CD4-positive, alpha-beta memory T cell (primary cell): ENCODE measurements at regions of chr1 and their contacts with region 1.

Region 1: DNA sequence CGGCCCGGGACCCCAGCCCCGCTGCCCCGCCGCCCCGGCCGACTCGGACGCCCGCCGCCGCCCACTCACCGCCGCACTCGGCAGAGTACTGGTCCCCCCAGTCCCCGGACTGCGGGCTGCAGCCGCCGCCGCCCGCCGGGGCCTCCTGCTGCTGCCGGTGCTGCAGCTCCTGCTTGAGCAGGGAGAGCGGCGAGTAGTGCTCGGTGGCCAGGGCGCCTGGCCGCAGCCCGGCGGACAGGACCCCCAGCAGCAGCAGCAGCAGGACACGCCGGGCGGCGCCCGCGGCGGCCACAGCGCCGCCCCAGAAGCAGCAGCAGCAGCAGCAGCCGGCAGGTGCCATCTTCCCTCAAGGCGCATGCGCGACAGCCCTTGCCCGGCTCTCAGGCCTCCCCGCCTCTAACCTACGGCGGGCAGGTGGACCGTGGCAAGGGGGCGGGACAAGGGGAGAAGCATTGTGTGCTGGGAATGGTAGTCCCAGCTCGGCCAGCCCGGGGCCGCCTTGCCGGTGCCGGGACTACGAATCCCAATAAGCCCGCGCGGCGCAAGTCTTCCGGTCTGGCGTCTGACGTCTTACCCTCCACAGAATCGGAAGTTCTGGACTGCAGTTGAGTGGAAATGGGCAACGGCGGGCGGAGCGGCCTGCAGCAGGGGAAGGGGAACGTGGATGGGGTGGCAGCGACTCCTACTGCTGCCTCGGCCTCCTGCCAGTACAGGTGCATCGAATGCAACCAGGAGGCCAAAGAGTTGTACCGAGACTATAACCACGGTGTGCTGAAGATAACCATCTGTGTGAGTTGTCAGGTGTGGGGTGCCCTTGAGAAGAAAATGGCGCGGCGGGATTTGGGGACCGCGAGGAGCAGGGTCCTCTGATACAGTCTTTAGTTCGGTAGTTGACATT is at the starts of genes ARV1 and TTC13:
- DNase-seq: peak; percentile 95 to 97 (median 96)
- H3K4me3 ChIP-seq: peak within 1 kb of the TSS; percentile 66 to 86
- H3K4me3 Mint-ChIP-seq: peak within 1 kb of the TSS; percentile 94 to 100 (median 98)
- H3K27ac ChIP-seq: peak within 1 kb of the TSS; percentile 69
- H3K27ac Mint-ChIP-seq: peak within 1 kb of the TSS; percentile 92 to 100 (median 97)
- H3K4me1 ChIP-seq: peaks cover 59% of the 10 kb centered on the region
- H3K4me1 Mint-ChIP-seq: peaks cover 34 to 41% (median 38%) of the 10 kb centered on the region in 4 donors
- H3K27me3 ChIP-seq: no peaks in the 10 kb centered on the region
- H3K27me3 Mint-ChIP-seq: no peaks in the 10 kb centered on the region
- total RNA-seq, gene ARV1: 13.8 to 14.2 TPM
- total RNA-seq, gene TTC13: 43.9 to 54.5 TPM

Region 2: GRCh38 chr1:230797942-230798418 is 180.8 kb before region 1 on chr1:
- CTCF ChIA-PET with region 1: no interaction called
- POLR2A ChIA-PET with region 1: no interaction called
- intact Hi-C with region 1: loop called (anchors 2 kb)
- DNase-seq: no peak
- H3K4me3 ChIP-seq: no peak overlapping the region
- H3K4me3 Mint-ChIP-seq: no peak overlapping the region
- H3K27ac ChIP-seq: no peak overlapping the region
- H3K27ac Mint-ChIP-seq: no peak overlapping the region
- H3K4me1 ChIP-seq: no peaks in the 10 kb centered on the region
- H3K4me1 Mint-ChIP-seq: no peaks in the 10 kb centered on the region
- H3K27me3 ChIP-seq: no peaks in the 10 kb centered on the region
- H3K27me3 Mint-ChIP-seq: peaks cover 11 to 18% of the 10 kb centered on the region in 2 donors

Region 3: GRCh38 chr1:230917284-230918135 is 61.2 kb before region 1 on chr1:
- CTCF ChIA-PET with region 1: interaction called, 19 read pairs
- POLR2A ChIA-PET with region 1: interaction called, 3 read pairs
- intact Hi-C with region 1: loop called (anchors 1 kb)
- DNase-seq: peak; percentile 67 to 74 (median 69)
- H3K4me3 ChIP-seq: no peak overlapping the region
- H3K4me3 Mint-ChIP-seq: no peak overlapping the region
- H3K27ac ChIP-seq: no peak overlapping the region
- H3K27ac Mint-ChIP-seq: peak overlapping the region in 2 of 7 donors; percentile 43 to 61
- H3K4me1 ChIP-seq: no peaks in the 10 kb centered on the region
- H3K4me1 Mint-ChIP-seq: peaks cover 0 to 2% (median 0%) of the 10 kb centered on the region in 4 donors
- H3K27me3 ChIP-seq: no peaks in the 10 kb centered on the region
- H3K27me3 Mint-ChIP-seq: no peaks in the 10 kb centered on the region

Region 4: GRCh38 chr1:230937371-230937770 is 41.4 kb before region 1 on chr1:
- CTCF ChIA-PET with region 1: interaction called, 10 read pairs
- POLR2A ChIA-PET with region 1: interaction called, 3 read pairs
- intact Hi-C with region 1: loop called (anchors 5 kb)
- DNase-seq: no peak
- H3K4me3 ChIP-seq: no peak overlapping the region
- H3K4me3 Mint-ChIP-seq: peak overlapping the region in 1 of 8 donors; percentile 3
- H3K27ac ChIP-seq: no peak overlapping the region
- H3K27ac Mint-ChIP-seq: peak overlapping the region in 5 of 7 donors; percentile 29 to 72 (median 52)
- H3K4me1 ChIP-seq: no peaks in the 10 kb centered on the region
- H3K4me1 Mint-ChIP-seq: peaks cover 0 to 33% (median 11%) of the 10 kb centered on the region in 4 donors
- H3K27me3 ChIP-seq: no peaks in the 10 kb centered on the region
- H3K27me3 Mint-ChIP-seq: no peaks in the 10 kb centered on the region

Region 5: GRCh38 chr1:230992100-230992774 is 13.5 kb after region 1 on chr1:
- CTCF ChIA-PET with region 1: no interaction called
- POLR2A ChIA-PET with region 1: no interaction called
- intact Hi-C with region 1: no loop called
- DNase-seq: no peak
- H3K4me3 ChIP-seq: no peak overlapping the region
- H3K4me3 Mint-ChIP-seq: no peak overlapping the region
- H3K27ac ChIP-seq: no peak overlapping the region
- H3K27ac Mint-ChIP-seq: peak overlapping the region in 1 of 7 donors; percentile 77
- H3K4me1 ChIP-seq: no peaks in the 10 kb centered on the region
- H3K4me1 Mint-ChIP-seq: peaks cover 0 to 6% (median 4%) of the 10 kb centered on the region in 4 donors
- H3K27me3 ChIP-seq: no peaks in the 10 kb centered on the region
- H3K27me3 Mint-ChIP-seq: no peaks in the 10 kb centered on the region

Region 6: GRCh38 chr1:231240883-231241735 is 262.4 kb after region 1 on chr1 and contains the start of gene GNPAT:
- CTCF ChIA-PET with region 1: no interaction called
- POLR2A ChIA-PET with region 1: interaction called, 3 read pairs
- intact Hi-C with region 1: loop called (anchors 1 kb)
- DNase-seq: peak; percentile 87 to 94 (median 91)
- H3K4me3 ChIP-seq: peak within 1 kb of the TSS; percentile 83 to 99
- H3K4me3 Mint-ChIP-seq: peak within 1 kb of the TSS; percentile 95 to 99 (median 98)
- H3K27ac ChIP-seq: peak within 1 kb of the TSS; percentile 93
- H3K27ac Mint-ChIP-seq: peak within 1 kb of the TSS; percentile 85 to 99 (median 98)
- H3K4me1 ChIP-seq: peaks cover 56% of the 10 kb centered on the region
- H3K4me1 Mint-ChIP-seq: peaks cover 55 to 85% (median 71%) of the 10 kb centered on the region in 4 donors
- H3K27me3 ChIP-seq: no peaks in the 10 kb centered on the region
- H3K27me3 Mint-ChIP-seq: no peaks in the 10 kb centered on the region
- total RNA-seq, gene GNPAT: 36.9 to 41.2 TPM

Region 7: DNA sequence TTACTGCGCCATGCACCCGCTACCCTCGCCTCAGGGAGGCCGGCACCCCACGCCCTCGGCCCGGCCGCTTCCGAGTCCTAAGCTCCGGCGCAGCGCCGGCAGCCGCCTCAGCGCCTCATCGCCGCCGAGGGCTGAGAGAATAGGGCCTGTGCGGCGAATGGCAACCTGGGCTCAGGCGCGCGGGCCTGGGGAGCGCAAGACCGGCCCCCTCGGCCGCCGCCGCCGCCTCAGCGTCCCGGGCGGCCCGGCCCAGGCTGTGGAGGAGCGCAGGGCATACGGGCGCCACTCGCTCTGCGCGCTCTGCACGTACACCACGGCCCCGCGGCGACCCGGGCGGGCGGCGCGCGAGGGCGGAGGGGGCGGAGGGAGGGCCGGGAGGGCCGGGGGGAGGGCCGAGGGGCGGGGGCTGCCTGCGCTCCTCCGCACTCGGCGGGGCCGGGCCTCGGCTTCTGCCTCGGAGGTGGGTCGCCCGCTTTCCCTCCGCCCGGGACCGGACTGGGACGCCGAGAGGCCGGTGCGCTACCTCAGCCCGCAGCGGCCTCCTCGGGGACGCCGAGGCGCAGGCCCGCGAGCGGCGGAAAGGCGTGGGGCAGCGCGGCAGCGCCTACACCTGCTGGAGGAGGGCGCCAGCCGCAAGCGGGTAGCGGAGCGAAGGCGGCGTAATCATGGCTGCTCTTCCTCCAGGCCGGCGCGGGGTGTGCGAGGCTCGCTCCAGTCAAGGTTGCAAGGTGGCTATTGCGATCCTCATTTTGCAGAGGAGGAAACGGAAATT is 443.4 kb after region 1 on chr1 and contains the start of gene EGLN1:
- CTCF ChIA-PET with region 1: no interaction called
- POLR2A ChIA-PET with region 1: interaction called, 3 read pairs
- intact Hi-C with region 1: loop called (anchors 5 kb)
- DNase-seq: peak; percentile 79 to 85 (median 84)
- H3K4me3 ChIP-seq: peak within 1 kb of the TSS; percentile 70 to 80
- H3K4me3 Mint-ChIP-seq: peak within 1 kb of the TSS; percentile 90 to 97 (median 95)
- H3K27ac ChIP-seq: peak within 1 kb of the TSS; percentile 63
- H3K27ac Mint-ChIP-seq: peak within 1 kb of the TSS; percentile 83 to 98 (median 95)
- H3K4me1 ChIP-seq: peaks cover 43% of the 10 kb centered on the region
- H3K4me1 Mint-ChIP-seq: peaks cover 29 to 49% (median 38%) of the 10 kb centered on the region in 4 donors
- H3K27me3 ChIP-seq: no peaks in the 10 kb centered on the region
- H3K27me3 Mint-ChIP-seq: no peaks in the 10 kb centered on the region
- total RNA-seq, gene EGLN1: 23.5 to 29.3 TPM